ENCODE measurements at regions of chr11 and their contacts with region 1.

Region 1: GRCh38 chr11:117946842-117947526 is 17.8 kb upstream of the TMPRSS13 start:
- ATAC-seq: peak; percentile 96 to 100 (median 96)
- H3K4me3 ChIP-seq: no peak overlapping the region
- H3K27ac ChIP-seq: no peak overlapping the region
- H3K4me1 ChIP-seq: peaks cover 0 to 6% of the 10 kb centered on the region in 2 donors

Region 2: DNA sequence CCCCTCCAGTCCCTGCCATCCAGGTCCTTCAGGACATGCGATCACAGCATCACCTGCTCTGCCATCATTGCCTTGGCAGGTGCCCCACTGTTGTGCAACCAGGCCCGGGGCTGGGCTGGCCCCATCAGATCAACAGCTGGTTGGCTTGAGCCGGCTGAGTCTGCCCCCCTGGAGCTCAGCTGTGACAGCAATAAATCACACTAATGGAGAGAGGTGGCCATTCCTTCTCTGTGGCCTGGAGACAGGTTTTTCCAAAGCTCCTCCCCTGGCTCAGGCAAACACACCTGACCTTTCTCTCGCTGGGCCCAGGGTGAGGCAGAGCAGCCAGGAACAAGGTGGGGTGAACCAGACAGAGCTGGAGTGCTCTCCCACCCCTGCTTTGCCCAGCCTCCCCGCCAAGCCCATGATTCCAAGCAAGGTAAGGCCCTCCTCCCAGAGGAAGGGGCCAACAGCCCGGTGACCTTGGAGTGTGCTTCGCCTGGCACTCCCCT is 113.5 kb before region 1 on chr11:
- in situ Hi-C with region 1: loop called in 5 of 9 experiments (anchors 10 to 25 kb)
- ATAC-seq: peak in 5 of 8 experiments; percentile 53 to 66 (median 62)
- H3K4me3 ChIP-seq: no peak overlapping the region
- H3K27ac ChIP-seq: peak overlapping the region; percentile 5 to 7
- H3K4me1 ChIP-seq: peaks cover 48 to 63% of the 10 kb centered on the region in 2 donors

Region 3: DNA sequence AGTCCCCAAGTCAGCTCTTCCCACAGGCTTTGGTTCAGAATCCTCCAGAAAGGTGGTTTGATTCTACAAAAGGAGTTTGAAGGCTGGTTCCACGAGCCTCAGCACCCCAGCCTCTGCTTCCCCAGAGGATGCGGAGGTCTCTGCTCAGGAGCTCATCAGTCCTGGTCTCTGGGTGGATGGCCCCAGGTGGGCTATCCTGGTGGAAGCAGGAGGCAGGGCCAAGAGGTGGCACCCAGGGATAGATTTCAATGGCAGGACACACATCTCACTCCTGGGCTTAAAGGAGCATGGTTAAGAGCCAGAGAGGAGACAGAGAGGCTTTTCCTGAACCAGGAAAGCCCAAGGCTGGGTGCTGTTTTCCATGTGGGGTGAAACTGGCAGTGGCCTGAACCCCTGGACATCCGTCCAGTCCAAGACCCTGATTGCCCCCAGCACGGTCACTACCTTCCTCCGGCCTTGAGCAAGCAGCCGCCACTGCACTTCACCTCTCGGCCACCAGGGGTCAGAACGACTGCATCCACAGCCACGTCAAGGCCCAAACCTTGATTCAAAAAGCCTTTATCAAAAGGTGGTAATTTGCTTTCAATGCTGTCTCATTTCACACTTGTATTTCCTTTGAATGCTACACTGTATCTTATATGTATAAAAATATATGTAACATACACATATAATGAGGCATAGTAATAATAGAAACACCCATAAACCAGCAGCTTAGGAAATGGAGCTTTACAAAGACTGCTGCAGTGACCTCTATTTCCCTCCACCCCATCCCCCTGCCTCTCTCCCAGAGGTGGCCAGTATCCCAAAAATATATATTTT is 103.1 kb before region 1 on chr11:
- in situ Hi-C with region 1: loop called in 8 of 9 experiments (anchors 5 to 25 kb)
- ATAC-seq: peak; percentile 67 to 90 (median 79)
- H3K4me3 ChIP-seq: no peak overlapping the region
- H3K27ac ChIP-seq: no peak overlapping the region
- H3K4me1 ChIP-seq: peaks cover 0 to 2% of the 10 kb centered on the region in 2 donors

Region 4: GRCh38 chr11:117851106-117851505 is 95.9 kb before region 1 on chr11:
- in situ Hi-C with region 1: loop called in 6 of 9 experiments (anchors 10 to 25 kb)
- ATAC-seq: peak in 4 of 8 experiments; percentile 27 to 95 (median 68)
- H3K4me3 ChIP-seq: no peak overlapping the region
- H3K27ac ChIP-seq: no peak overlapping the region
- H3K4me1 ChIP-seq: no peaks in the 10 kb centered on the region

Measured in motor neuron (in vitro differentiated cells).